PC-9 (cell line): ENCODE measurements at regions of chr4 and their contacts with region 1.

Region 1: DNA sequence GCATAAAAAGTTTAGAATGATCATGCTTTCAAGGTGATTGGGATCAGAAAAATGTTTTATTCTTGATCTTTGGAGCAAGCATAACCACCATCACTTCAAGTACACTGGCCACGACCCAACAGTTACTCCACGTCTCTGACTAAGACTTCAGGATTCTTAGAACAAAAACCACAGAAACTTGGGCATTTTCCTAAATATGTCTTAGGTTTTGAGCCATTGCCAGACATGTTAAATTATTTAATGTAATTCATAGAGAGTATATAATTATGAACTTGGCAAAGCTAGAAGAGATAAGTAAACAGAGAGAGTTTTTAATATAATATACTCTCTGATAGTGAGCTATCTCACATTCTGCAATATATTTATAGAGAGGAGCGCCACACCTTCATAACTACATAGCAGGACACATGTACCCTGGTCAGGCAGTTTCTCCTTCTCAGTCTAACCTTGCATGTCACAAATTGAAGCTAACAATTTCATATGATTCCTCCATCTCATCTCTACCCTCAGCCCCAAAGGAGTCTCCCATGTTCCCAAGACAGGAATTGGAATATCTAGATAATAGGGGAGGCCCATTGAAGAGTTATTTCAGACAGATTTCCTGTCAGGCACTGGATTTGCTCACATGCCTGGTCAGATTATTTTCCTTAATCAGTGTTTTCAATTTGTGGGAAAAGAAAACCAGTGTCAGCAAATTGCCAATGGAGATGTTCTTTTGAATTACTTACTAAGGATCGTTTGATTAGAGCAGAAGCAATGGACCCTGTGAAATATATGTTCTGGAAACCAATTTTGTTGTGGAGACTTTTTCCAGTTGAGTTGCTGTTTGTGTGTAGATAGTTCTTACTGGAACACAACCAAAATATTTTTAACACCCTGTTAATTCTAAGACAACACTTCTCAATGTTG is 61.7 kb upstream of the GUCY1A1 start:
- DNase-seq: peak in 1 of 2 experiments; percentile 38
- H3K4me3 ChIP-seq: no peak overlapping the region
- H3K27ac ChIP-seq: no peak overlapping the region
- H3K4me1 ChIP-seq: no peaks in the 10 kb centered on the region
- H3K27me3 ChIP-seq: no peaks in the 10 kb centered on the region
- CTCF ChIP-seq: no peak

Region 2: DNA sequence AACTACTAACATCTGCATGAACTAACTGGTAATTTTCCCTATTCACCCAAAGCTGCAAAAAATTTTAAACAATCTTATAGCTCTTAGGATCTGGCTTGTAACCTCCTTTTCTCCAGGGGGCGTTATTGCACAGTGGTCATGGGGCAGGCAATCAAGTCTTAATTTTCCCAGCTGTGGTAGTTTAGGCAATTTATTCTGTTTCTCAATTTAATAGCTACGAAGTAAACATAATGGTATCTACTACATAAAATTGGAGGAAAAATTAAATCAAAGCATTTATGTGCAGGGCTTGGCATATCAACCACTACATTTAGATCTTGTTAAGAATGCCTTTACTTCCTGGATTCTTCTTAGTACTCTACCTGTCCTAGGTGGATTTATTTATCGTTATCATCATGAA is 75.7 kb before region 1 on chr4:
- CTCF ChIA-PET with region 1: no interaction called
- POLR2A ChIA-PET with region 1: no interaction called
- intact Hi-C with region 1: loop called (anchors 5 kb)
- DNase-seq: peak in 1 of 2 experiments; percentile 6
- H3K4me3 ChIP-seq: no peak overlapping the region
- H3K27ac ChIP-seq: peak overlapping the region; percentile 62; the same call in 1 of the 2 replicates
- H3K4me1 ChIP-seq: peaks cover 11% of the 10 kb centered on the region; the same call in 1 of the 2 replicates
- H3K27me3 ChIP-seq: no peaks in the 10 kb centered on the region
- CTCF ChIP-seq: no peak

Region 3: GRCh38 chr4:155758481-155759404 is 153.8 kb after region 1 on chr4 and contains the start of gene GUCY1B1:
- CTCF ChIA-PET with region 1: no interaction called
- POLR2A ChIA-PET with region 1: no interaction called
- intact Hi-C with region 1: loop called (anchors 5 kb)
- DNase-seq: peak; percentile 64 to 77
- H3K4me3 ChIP-seq: peak within 1 kb of the TSS; percentile 55
- H3K27ac ChIP-seq: no peak within 1 kb of the TSS
- H3K4me1 ChIP-seq: no peaks in the 10 kb centered on the region
- H3K27me3 ChIP-seq: no peaks in the 10 kb centered on the region; the same call in 1 of the 2 replicates
- CTCF ChIP-seq: no peak
- total RNA-seq, gene GUCY1B1: 0.38 and 0.39 TPM in 2 replicates

Region 4: GRCh38 chr4:156528216-156528615 is 923.2 kb after region 1 on chr4:
- CTCF ChIA-PET with region 1: no interaction called
- POLR2A ChIA-PET with region 1: no interaction called
- intact Hi-C with region 1: no loop called
- DNase-seq: no peak
- H3K4me3 ChIP-seq: no peak overlapping the region
- H3K27ac ChIP-seq: no peak overlapping the region
- H3K4me1 ChIP-seq: no peaks in the 10 kb centered on the region
- H3K27me3 ChIP-seq: no peaks in the 10 kb centered on the region
- CTCF ChIP-seq: no peak